Activated CD8-positive, alpha-beta memory T cell treated with anti-CD3 and anti-CD28 coated beads, Interleukin-2, amount 10 ng/mL, durations not matched to agents 7 days and 5 days (primary cell): ENCODE measurements at regions of chr17 and their contacts with region 1.

Region 1: GRCh38 chr17:81683584-81684237 is at the starts of genes ARL16 and HGS:
- DNase-seq: peak; percentile 98
- ATAC-seq: peak; percentile 98
- H3K4me3 Mint-ChIP-seq: peak within 1 kb of the TSS; percentile 81
- H3K27ac Mint-ChIP-seq: peak within 1 kb of the TSS; percentile 83
- H3K4me1 Mint-ChIP-seq: peaks cover 32% of the 10 kb centered on the region
- H3K27me3 Mint-ChIP-seq: no peaks in the 10 kb centered on the region
- total RNA-seq, gene ARL16: 14.9 to 15.4 TPM
- total RNA-seq, gene HGS: 145 to 159 TPM

Region 2: GRCh38 chr17:81712468-81713003 is 28.8 kb after region 1 on chr17:
- CTCF ChIA-PET with region 1: interaction called, 10 read pairs
- DNase-seq: no peak
- ATAC-seq: peak; percentile 32
- H3K4me3 Mint-ChIP-seq: peak overlapping the region; percentile 81
- H3K27ac Mint-ChIP-seq: peak overlapping the region; percentile 69
- H3K4me1 Mint-ChIP-seq: peaks cover 29% of the 10 kb centered on the region
- H3K27me3 Mint-ChIP-seq: no peaks in the 10 kb centered on the region